Dorsolateral prefrontal cortex (tissue), 120 donors: ENCODE measurements at regions of chr3 and their contacts with region 1.

Region 1: DNA sequence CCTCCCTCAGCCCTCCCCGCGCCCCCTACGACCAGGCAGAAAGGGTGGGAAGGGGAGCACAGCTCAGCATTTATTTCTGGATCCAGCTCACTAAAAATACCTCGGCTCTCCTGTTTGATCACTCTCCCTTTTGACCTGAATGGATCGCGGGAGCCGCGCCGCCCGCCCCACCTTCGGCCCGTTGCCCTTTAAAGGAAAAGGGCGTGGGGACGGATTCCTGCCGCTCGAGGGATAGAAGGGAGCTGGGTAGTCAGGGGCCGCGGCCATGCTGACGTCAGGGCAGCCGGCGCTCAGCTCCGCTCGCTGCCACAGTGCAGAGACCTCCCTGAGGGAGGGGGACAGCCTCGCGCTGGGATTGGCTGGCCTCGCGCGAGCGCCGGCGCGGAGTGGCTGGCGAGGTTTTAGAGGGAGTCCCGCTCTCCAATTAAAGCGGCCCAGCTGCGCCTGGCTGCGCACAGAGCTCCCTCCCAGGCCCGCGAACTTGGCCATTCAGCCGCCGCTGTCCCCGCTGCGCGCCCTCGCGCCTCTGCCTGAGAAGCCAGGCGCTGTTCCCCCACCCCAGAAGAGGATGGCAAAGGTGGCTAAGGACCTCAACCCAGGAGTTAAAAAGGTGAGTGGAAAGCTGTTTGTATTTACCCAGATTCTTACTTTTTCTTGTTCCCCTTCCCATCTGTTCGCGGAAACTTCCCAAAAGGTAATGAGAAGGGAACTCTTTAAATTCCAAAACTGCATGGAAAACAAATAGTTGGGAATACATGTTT is at the start of gene LMCD1:
- DNase-seq: peak; percentile 85 to 99 (median 96)
- H3K4me3 ChIP-seq: peak within 1 kb of the TSS; percentile 51 to 94 (median 76)
- H3K27ac ChIP-seq: peak within 1 kb of the TSS; percentile 82 to 97 (median 94)
- H3K27me3 ChIP-seq: no peaks in the 10 kb centered on the region
- CTCF ChIP-seq: peak in 38 of 56 donors; percentile 9 to 54 (median 30)
- total RNA-seq, gene LMCD1: 4.2 to 25.9 (median 8.8) TPM

Region 2: DNA sequence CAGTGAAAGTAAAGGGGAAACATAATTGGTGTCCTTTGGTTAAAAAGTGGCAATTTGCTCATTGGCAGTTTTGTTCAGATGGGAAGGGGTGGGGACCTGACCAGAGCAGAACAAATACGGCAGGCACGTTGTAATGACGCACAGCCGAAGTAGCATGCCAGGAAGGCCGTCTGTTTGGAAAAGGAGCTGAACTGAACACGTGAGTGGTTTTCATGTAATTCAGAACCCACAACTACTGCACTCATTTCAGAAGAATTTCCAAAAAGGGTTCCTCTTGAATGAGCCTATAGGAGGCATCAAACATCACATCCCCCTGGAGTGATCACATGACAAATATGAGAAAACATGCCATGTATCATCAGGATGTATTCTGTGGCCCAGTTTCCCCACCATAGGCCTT is 42.8 kb before region 1 on chr3:
- intact Hi-C with region 1: no loop called
- DNase-seq: no peak
- H3K4me3 ChIP-seq: no peak overlapping the region
- H3K27ac ChIP-seq: no peak overlapping the region
- H3K27me3 ChIP-seq: no peaks in the 10 kb centered on the region
- CTCF ChIP-seq: no peak

Region 3: DNA sequence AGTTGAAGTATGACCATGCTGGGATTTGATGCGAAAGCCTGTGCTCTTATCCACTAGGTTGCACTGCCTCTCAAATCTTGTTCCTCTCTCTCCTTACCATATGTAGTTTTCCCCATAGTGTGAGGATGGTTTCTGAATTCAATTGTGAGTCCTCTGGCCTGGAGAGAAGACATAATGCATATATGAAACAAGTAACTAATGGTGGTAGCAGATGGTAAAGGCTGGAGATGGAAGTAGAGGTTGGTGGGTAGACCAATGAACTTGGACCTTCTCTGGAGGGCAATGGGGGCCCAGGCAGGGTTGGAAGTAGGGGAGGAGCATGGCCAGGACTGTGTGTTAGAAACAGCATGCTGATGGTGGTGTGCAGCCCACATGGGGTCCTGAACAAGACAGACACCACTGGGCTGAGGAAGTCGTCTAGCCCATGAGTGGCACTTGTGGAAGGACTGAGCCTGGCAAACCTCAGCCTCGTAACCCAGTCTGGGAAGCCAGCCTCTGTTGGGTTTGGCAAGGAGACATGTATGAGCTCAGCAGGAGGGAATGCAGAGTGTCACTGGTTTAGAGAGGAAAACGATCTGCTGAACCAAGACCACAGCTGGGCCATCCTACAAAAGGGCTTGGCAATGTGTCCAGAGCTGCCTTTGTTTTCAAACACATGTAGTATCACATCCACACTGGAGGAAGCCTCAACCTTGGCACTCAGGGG is 18.4 kb before region 1 on chr3:
- intact Hi-C with region 1: loop called in 1 of 2 experiments (anchors 2 kb)
- DNase-seq: peak in 9 of 10 donors; percentile 31 to 80 (median 63)
- H3K4me3 ChIP-seq: no peak overlapping the region
- H3K27ac ChIP-seq: peak overlapping the region in 17 of 59 donors; percentile 5 to 63 (median 31)
- H3K27me3 ChIP-seq: no peaks in the 10 kb centered on the region
- CTCF ChIP-seq: no peak

Region 4: DNA sequence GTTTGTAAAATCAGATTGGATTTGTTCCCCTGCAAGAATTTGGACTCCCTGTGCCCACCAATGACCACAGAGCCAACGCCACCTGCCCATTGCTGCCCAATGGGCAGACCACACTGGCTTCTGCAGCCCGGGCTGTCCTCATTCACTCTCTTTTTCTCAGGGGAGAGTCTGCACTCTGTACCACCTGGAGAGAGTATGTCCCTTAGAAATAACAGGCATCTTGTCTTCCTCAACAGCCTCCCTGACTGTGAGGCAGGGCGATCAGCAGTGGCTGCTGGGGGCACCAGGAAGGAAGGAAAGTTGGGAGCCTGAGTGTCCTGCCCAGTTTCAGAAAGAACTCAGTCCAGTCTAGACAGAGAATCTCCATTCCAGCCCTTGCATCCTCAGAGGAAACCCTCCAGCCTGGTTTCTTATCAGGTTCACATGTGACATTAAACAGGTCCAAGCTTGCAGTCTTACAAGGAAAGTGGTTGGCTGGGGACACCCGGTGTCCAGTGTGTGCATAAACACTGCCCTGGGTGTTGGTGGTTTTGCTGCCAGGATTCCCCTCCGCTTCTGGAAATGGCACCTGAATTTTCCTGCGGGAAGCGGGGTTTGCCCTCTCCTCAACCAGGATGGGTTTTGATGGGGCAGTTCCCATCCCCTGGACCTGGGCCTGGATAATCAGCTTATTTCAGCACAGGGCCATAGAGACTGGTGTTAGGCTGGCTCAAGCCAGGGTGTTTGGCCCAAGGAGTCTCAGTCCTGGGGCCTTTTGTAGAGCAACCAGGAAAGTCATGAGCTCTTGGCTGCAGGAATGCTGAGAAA is 105.9 kb after region 1 on chr3:
- intact Hi-C with region 1: loop called in 1 of 2 experiments (anchors 5 kb)
- DNase-seq: peak in 4 of 10 donors; percentile 18 to 55 (median 46)
- H3K4me3 ChIP-seq: no peak overlapping the region
- H3K27ac ChIP-seq: no peak overlapping the region
- H3K27me3 ChIP-seq: no peaks in the 10 kb centered on the region
- CTCF ChIP-seq: peak in 54 of 56 donors; percentile 25 to 72 (median 54)

Region 5: DNA sequence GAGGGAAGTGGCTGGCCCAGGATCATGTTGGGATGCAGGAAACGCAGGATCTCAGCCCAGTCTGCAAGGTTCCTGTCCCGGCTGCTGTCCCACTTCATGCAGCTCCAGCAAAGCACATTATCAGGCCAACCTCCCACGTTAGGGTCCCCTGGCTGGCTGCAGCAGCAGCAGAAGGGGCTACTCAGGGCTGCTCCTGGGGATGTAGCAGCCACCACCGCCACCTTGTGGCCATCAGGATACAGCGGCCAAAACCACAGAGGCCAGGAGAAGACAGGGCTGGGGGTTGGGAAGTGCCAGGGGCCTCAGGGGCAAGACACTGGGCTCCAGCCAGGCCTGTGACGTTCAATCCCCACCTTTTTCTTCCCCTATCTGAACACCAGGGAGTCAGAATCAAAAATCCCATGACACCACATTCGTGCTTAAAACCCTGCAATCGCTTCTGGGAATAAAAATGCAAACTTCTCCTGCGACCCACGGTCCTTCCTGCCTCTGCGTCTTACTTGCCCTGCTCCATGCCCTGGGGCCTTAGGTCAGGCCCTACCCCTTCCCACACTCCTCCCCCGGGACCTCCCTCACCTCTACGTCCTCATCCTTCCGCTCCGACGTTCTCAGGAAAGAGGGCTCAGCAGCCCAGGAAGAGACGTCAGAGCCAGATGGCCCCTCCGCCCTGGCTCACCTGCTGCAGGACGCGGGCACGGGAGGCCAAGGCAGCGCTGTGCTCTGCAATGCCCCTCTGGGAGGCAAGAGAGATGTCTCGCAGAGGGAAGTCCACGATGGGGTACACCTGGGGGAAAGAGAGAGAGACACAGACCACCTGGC is 121.5 kb after region 1 on chr3:
- intact Hi-C with region 1: loop called in 1 of 2 experiments (anchors 5 kb)
- DNase-seq: peak; percentile 31 to 81 (median 69)
- H3K4me3 ChIP-seq: peak overlapping the region in 15 of 59 donors; percentile 3 to 46 (median 27)
- H3K27ac ChIP-seq: no peak overlapping the region
- H3K27me3 ChIP-seq: no peaks in the 10 kb centered on the region
- CTCF ChIP-seq: peak; percentile 75 to 98 (median 93)